ENCODE measurements at regions of chr15 and their contacts with region 1.

Region 1: GRCh38 chr15:85485956-85486567 is 105.7 kb downstream of the AKAP13 start:
- DNase-seq: peak; percentile 81
- ATAC-seq: peak; percentile 61
- H3K4me3 ChIP-seq: no peak overlapping the region
- H3K27ac ChIP-seq: no peak overlapping the region
- H3K4me1 ChIP-seq: peaks cover 4% of the 10 kb centered on the region
- H3K27me3 ChIP-seq: no peaks in the 10 kb centered on the region
- CTCF ChIP-seq: peak; percentile 68
- POLR2A ChIP-seq: no peak
- RAD21 ChIP-seq: peak; percentile 81

Region 2: DNA sequence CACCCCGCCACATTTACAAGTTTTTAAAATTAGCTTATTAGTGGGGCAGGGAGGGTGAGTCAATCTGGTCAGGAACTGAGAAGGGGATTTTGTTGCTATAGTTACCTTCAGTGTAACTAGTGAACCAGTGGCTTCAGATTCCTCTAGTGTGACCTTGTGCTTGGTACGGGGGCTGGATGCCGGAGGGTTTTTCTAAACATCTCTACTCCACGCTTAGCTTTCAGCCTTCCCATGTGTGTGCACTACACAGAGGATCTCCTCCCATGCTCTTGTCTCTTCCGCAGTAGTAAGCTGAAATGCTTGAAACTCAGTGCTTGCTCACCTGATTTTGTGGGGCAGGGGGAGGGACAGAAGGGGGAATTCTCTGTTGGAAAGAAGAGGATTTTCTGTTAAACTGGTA is 173.6 kb before region 1 on chr15:
- CTCF ChIA-PET with region 1: no interaction called
- POLR2A ChIA-PET with region 1: no interaction called
- dilution Hi-C with region 1: no loop called
- in situ Hi-C with region 1: no loop called
- intact Hi-C with region 1: loop called (anchors 5 kb)
- DNase-seq: peak; percentile 85
- ATAC-seq: peak; percentile 22
- H3K4me3 ChIP-seq: no peak overlapping the region
- H3K27ac ChIP-seq: peak overlapping the region; percentile 23; the same call in 1 of the 2 replicates
- H3K4me1 ChIP-seq: peaks cover 17% of the 10 kb centered on the region
- H3K27me3 ChIP-seq: no peaks in the 10 kb centered on the region
- CTCF ChIP-seq: no peak
- POLR2A ChIP-seq: no peak
- RAD21 ChIP-seq: no peak

Region 3: GRCh38 chr15:85380217-85380811 is 105.7 kb before region 1 on chr15 and contains the start of gene AKAP13:
- CTCF ChIA-PET with region 1: no interaction called
- POLR2A ChIA-PET with region 1: no interaction called
- dilution Hi-C with region 1: no loop called
- in situ Hi-C with region 1: no loop called
- intact Hi-C with region 1: loop called (anchors 5 kb)
- DNase-seq: peak; percentile 99
- ATAC-seq: peak; percentile 93
- H3K4me3 ChIP-seq: peak within 1 kb of the TSS; percentile 67
- H3K27ac ChIP-seq: peak within 1 kb of the TSS; percentile 78
- H3K4me1 ChIP-seq: peaks cover 3% of the 10 kb centered on the region
- H3K27me3 ChIP-seq: no peaks in the 10 kb centered on the region
- CTCF ChIP-seq: no peak
- POLR2A ChIP-seq: peak; percentile 73
- RAD21 ChIP-seq: peak; percentile 26
- total RNA-seq, gene AKAP13: 46.4 and 46.9 TPM in 2 replicates

Region 4: DNA sequence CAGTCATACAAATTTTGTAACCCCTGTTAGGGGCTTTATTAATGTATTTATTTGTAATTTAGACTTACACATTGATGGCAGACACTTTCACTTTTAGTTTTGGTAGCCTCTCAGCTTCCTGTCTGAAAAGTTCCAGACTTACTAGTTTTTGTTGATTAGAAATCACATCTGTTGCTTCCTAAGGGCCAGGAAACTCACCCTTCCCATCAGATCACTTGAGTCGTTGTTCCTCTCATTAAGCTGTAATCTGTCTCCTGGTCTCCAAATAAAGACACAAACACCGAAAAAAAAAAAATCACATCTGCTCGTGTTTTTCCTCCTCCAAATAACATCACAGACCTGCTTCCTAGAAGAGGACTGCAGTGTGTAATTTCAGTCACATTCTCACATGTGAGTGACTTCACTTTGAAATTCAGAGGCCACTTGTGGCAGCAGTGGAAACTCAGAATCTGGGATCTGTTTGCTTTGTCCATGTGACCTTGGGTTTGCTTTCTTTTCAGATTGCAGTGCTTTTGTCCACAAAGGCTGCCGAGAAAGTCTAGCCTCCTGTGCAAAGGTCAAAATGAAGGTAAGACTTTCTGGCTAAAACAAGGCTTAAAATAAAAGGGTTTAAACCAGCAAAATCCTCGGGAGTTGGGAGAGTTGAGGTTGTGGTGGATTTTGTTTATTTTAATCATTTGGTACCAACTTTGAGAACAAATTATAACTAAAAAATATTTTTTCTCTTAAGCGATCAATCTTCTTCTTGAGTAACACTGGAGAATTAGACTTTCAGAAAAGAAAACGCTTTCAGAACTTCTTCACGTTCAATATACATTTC is 221.7 kb after region 1 on chr15:
- CTCF ChIA-PET with region 1: no interaction called
- POLR2A ChIA-PET with region 1: no interaction called
- dilution Hi-C with region 1: no loop called
- in situ Hi-C with region 1: no loop called
- intact Hi-C with region 1: loop called (anchors 10 kb)
- DNase-seq: peak; percentile 51
- ATAC-seq: peak; percentile 43
- H3K4me3 ChIP-seq: peak overlapping the region; percentile 9; the same call in 1 of the 2 replicates
- H3K27ac ChIP-seq: peak overlapping the region; percentile 27; the same call in 1 of the 2 replicates
- H3K4me1 ChIP-seq: peaks cover 14% of the 10 kb centered on the region
- H3K27me3 ChIP-seq: no peaks in the 10 kb centered on the region
- CTCF ChIP-seq: no peak
- POLR2A ChIP-seq: no peak
- RAD21 ChIP-seq: no peak

Region 5: GRCh38 chr15:85730001-85730820 is 244.1 kb after region 1 on chr15:
- CTCF ChIA-PET with region 1: no interaction called
- POLR2A ChIA-PET with region 1: no interaction called
- dilution Hi-C with region 1: no loop called
- in situ Hi-C with region 1: no loop called
- intact Hi-C with region 1: loop called (anchors 2 kb)
- DNase-seq: peak; percentile 71
- ATAC-seq: peak; percentile 73
- H3K4me3 ChIP-seq: no peak overlapping the region
- H3K27ac ChIP-seq: no peak overlapping the region
- H3K4me1 ChIP-seq: peaks cover 4% of the 10 kb centered on the region
- H3K27me3 ChIP-seq: no peaks in the 10 kb centered on the region
- CTCF ChIP-seq: peak; percentile 80
- POLR2A ChIP-seq: no peak
- RAD21 ChIP-seq: peak; percentile 80

Measured in IMR-90 (cell line).